ENCODE measurements at regions of chr4 and their contacts with region 1.

Region 1: GRCh38 chr4:75653845-75654503 is 19.2 kb downstream of the G3BP2 start:
- DNase-seq: peak; percentile 30
- ATAC-seq: peak; percentile 40; the same call in 1 of the 2 replicates
- H3K4me3 ChIP-seq: no peak overlapping the region
- H3K27ac ChIP-seq: no peak overlapping the region
- H3K4me1 ChIP-seq: peaks cover 3% of the 10 kb centered on the region
- H3K27me3 ChIP-seq: no peaks in the 10 kb centered on the region
- CTCF ChIP-seq: peak; percentile 55

Region 2: GRCh38 chr4:75584067-75584466 is 69.9 kb before region 1 on chr4:
- CTCF ChIA-PET with region 1: no interaction called
- POLR2A ChIA-PET with region 1: no interaction called
- intact Hi-C with region 1: no loop called
- DNase-seq: peak; percentile 10
- ATAC-seq: no peak
- H3K4me3 ChIP-seq: no peak overlapping the region
- H3K27ac ChIP-seq: no peak overlapping the region
- H3K4me1 ChIP-seq: no peaks in the 10 kb centered on the region; the same call in 1 of the 2 replicates
- H3K27me3 ChIP-seq: no peaks in the 10 kb centered on the region
- CTCF ChIP-seq: no peak

Region 3: DNA sequence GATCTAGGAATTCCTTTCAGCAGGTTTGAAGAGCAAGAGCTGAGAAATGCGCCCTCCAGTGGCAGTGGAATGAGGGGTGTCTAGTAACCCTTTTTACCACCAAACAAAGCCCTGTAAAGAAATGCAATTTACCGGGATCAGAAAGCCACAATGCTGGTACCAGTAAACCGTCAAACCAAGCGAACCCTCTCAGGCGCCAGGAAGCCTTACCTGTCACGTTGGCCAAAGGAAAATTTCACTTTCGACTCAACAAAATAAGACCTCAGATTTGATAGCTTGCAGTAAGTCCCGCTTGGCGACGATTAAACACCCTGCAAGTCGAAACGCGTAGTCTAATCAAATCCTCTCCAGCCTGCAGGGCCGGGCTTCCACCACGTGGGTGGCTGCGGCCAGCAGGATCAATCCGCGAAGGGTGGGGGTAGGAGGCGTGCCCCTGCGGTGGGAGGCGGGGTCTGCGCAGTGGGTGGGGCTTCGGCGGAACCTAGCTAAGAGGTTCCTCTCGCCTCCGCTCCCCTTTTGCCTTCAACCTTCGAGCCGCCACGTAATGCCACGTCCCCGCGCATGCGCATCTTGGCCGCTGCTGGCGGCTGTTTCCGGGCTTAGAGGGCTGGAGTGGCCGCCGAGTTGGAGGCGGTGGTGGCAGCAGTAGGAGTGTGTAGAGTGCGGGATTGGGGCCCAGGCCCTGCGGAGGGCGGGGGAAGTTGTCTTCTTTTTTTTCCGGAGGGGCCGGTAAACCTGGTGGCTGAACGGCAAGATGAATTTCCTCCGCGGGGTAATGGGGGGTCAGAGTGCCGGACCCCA is 70.3 kb after region 1 on chr4 and contains the start of gene USO1:
- CTCF ChIA-PET with region 1: interaction called, 3 read pairs
- POLR2A ChIA-PET with region 1: interaction called, 4 read pairs
- intact Hi-C with region 1: loop called (anchors 5 kb)
- DNase-seq: peak; percentile 95
- ATAC-seq: peak; percentile 83
- H3K4me3 ChIP-seq: peak within 1 kb of the TSS; percentile 94
- H3K27ac ChIP-seq: peak within 1 kb of the TSS; percentile 82
- H3K4me1 ChIP-seq: peaks cover 27% of the 10 kb centered on the region
- H3K27me3 ChIP-seq: no peaks in the 10 kb centered on the region
- CTCF ChIP-seq: peak; percentile 77
- total RNA-seq, gene USO1: 29.9 and 34.3 TPM in 2 replicates